HEK293 (cell line): ENCODE measurements at regions of chr12 and their contacts with region 1.

Region 1: DNA sequence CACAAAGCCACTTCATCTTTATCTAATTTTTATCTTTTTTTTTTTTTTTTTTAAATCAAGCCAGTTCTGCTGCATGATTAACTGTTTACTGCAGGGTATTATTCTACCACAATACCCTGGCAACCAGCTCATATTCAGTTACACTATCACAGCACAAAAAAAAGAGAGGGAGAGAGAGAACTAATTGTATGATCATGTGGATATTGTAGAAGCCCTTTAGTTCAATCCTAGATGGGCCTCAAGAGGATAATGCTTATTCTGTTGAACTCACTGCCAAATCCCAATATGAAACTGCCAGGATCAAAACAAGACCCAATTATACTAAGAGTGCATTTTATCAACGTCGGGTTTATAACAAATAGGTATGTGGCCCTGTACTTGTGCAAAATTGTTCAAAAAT is 51.5 kb downstream of the MED13L start:
- H3K4me3 ChIP-seq: no peak overlapping the region
- H3K27ac ChIP-seq: no peak overlapping the region
- H3K4me1 ChIP-seq: peaks cover 5% of the 10 kb centered on the region
- CTCF ChIP-seq: no peak

Region 2: DNA sequence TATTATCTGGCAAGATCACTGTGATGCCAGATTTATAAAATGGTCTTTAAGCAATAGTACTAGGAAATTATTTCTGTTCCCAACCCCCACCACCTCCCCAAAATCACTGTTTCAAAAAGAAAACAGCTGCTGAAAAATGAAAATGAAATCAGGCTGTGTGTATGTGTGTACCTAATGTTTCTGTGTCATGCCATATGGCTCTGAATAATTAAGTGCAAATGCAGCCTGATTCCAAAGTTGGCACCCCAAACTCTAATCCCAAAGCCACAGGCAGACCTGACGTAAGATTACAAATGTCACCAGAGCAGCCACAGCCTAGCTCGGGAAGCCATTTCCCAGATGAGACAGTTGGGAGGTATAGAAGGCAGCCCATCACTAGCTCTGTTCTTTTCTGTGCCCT is 124.0 kb before region 1 on chr12:
- CTCF ChIA-PET with region 1: no interaction called
- POLR2A ChIA-PET with region 1: no interaction called
- H3K4me3 ChIP-seq: no peak overlapping the region
- H3K27ac ChIP-seq: no peak overlapping the region
- H3K4me1 ChIP-seq: no peaks in the 10 kb centered on the region
- CTCF ChIP-seq: no peak

Region 3: DNA sequence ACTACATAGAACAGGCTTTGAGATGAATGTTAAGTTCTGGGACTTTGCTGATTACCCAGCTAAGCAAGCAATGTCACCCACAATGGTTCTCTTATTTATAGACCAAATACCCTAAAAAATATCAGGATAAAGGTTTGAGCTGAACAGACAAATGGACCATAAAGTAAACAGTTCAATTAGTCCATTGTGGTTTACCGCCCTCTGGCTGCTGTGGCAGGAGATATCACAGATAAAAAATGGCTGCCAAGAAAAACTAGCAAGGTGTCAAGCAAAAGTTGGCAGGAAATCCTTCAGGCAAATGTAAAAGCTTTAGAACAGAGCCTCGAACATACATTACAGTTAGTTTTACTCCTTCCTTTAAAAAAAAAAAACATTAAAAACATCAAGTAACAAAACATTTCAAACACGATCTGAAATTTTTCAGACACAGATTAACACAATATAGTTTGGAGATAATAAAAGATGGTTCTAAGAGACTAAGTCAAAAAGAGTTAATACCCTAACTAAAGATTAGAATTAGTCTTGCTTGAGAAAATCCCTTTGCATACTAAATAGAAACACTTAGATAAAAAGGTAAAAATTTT is 10.2 kb after region 1 on chr12:
- CTCF ChIA-PET with region 1: interaction called, 12 read pairs
- POLR2A ChIA-PET with region 1: interaction called, 3 read pairs
- H3K4me3 ChIP-seq: no peak overlapping the region
- H3K27ac ChIP-seq: no peak overlapping the region
- H3K4me1 ChIP-seq: peaks cover 31% of the 10 kb centered on the region
- CTCF ChIP-seq: no peak; the same call in 1 of the 2 replicates